ENCODE measurements at regions of chr17 and their contacts with region 1.

Region 1: GRCh38 chr17:1365445-1366039 is 34.5 kb downstream of the YWHAE start:
- DNase-seq: no peak
- ATAC-seq: peak; percentile 90
- H3K4me3 ChIP-seq: no peak overlapping the region
- H3K27ac ChIP-seq: peak overlapping the region; percentile 21
- H3K4me1 ChIP-seq: peaks cover 61% of the 10 kb centered on the region
- H3K27me3 ChIP-seq: no peaks in the 10 kb centered on the region
- CTCF ChIP-seq: peak; percentile 84

Region 2: GRCh38 chr17:1438593-1439083 is 73.1 kb after region 1 on chr17:
- intact Hi-C with region 1: loop called (anchors 10 kb)
- DNase-seq: no peak
- ATAC-seq: peak; percentile 51
- H3K4me3 ChIP-seq: no peak overlapping the region
- H3K27ac ChIP-seq: no peak overlapping the region
- H3K4me1 ChIP-seq: no peaks in the 10 kb centered on the region
- H3K27me3 ChIP-seq: no peaks in the 10 kb centered on the region
- CTCF ChIP-seq: no peak

Region 3: DNA sequence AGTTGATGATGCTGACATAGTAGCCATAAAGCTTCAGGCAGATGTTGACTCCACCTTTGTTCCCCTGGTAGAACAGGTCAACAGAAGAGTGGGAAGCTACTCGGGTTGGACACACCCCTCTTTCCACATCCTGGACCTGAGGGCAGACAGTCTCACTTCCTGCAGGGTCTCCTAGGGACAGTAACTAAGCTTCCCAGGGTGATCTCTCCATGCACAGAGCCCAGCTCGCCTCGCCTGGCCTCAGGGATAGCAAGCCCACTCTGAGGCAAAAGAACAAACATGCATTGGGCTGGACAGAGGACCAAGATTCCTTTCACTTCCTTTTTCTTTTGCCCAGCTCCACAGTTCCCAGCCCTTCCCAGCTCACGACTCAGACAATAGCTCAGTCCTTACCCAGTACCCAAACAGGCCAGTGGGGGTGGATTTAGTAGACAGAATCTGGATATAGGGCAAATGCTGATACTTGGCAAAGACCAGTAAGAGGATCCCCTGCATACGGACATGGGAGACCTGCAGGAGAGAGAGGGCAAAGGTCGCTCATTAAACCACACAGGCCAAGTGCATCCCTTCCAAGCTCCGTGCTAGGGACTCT is 143.8 kb after region 1 on chr17:
- intact Hi-C with region 1: loop called (anchors 10 kb)
- DNase-seq: no peak
- ATAC-seq: peak; percentile 3
- H3K4me3 ChIP-seq: no peak overlapping the region
- H3K27ac ChIP-seq: no peak overlapping the region
- H3K4me1 ChIP-seq: peaks cover 43% of the 10 kb centered on the region
- H3K27me3 ChIP-seq: no peaks in the 10 kb centered on the region
- CTCF ChIP-seq: no peak

Measured in upper lobe of right lung (tissue), 1 donor.